Psoas muscle (tissue), 8 donors: ENCODE measurements at regions of chr6 and their contacts with region 1.

Region 1: GRCh38 chr6:40308533-40309306 is 278.4 kb downstream of the LRFN2 start:
- DNase-seq: peak in 1 of 2 donors; percentile 41
- ATAC-seq: peak; percentile 59 to 85 (median 73)
- H3K4me3 ChIP-seq: no peak overlapping the region
- H3K27ac ChIP-seq: no peak overlapping the region
- H3K4me1 ChIP-seq: no peaks in the 10 kb centered on the region
- H3K27me3 ChIP-seq: no peaks in the 10 kb centered on the region
- CTCF ChIP-seq: peak; percentile 88

Region 2: DNA sequence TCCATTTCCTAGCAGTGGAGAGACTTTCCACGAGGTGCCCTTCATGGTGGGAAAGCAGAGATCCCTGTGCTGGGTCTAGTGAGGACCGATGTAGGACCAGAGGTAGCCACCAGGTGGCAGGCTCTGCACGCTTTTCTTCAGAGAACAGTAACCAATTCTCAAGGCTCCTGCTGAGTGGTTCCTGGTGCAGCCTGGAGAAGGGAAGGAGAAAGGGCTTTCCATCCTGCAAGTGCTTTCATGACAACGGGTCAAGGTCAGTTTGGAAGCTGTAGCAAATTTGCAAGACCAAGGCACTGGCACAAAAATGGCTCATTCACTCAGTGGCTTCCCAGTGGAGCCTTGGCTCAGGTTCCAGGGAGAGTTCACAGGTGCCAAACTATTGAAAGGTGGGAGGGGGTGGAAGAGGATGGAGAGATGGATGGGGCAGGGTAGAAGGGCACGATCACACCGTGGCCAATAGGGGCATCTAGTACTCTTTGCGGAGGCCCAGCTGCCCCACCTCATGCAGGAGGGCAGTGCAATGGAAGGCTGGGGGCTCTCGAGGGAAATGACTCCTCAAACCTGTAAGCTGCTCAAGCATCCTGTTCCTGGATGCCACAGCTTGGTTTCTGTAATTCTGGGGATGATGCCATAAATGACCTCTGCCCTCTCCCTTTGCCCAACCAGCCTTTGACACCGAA is 960.7 kb before region 1 on chr6:
- intact Hi-C with region 1: loop called in 1 of 2 experiments (anchors 10 kb)
- DNase-seq: peak; percentile 70 to 78
- ATAC-seq: peak; percentile 83 to 86 (median 84)
- H3K4me3 ChIP-seq: no peak overlapping the region
- H3K27ac ChIP-seq: no peak overlapping the region
- H3K4me1 ChIP-seq: no peaks in the 10 kb centered on the region
- H3K27me3 ChIP-seq: no peaks in the 10 kb centered on the region
- CTCF ChIP-seq: peak; percentile 82

Region 3: GRCh38 chr6:39361657-39362486 is 946.8 kb before region 1 on chr6:
- intact Hi-C with region 1: loop called in 1 of 2 experiments (anchors 10 kb)
- DNase-seq: peak; percentile 50 to 73
- ATAC-seq: peak; percentile 84 to 91 (median 86)
- H3K4me3 ChIP-seq: no peak overlapping the region
- H3K27ac ChIP-seq: no peak overlapping the region
- H3K4me1 ChIP-seq: no peaks in the 10 kb centered on the region
- H3K27me3 ChIP-seq: no peaks in the 10 kb centered on the region
- CTCF ChIP-seq: peak; percentile 78

Region 4: DNA sequence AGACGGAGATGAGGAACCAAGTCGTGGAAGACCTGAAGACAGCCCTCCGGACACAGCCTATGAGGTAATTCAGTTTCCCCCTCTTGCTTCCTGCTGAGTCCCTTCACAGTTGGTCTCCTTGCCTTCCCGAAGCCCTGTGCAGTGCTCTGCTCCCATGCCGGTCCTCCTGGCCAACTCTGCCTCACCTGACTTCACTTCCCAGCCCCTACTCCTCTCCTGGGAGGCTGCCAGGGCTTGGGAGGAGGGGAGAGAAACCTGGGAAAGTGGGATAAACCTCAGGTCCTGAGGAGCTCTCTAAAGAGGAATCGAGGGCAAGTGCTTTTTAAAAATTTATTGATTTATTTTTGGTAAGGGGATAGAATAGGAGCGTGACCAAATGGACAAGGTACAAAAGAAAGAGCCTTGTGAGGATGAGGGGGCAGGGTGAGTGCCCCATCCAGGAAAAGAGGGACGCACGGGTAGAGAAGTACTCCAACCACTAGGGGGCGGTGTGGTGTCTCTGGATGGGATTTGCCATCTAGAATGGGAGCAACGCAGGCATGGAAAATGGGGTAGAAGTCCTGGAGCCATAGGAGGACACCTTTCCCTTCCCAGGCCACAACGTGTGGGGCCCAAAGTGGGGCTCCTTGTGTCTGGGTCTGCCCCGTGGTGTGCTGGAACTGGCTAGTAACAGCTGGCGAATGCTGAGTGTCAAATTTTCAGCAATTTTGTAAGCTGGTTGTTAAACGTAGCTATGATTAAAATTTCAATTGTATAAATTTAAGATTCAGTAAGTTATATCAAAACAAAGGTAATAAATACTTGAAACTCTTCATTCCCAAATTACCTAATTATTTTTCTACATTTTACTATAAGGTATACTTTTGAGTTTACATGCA is 443.5 kb before region 1 on chr6:
- intact Hi-C with region 1: loop called in 1 of 2 experiments (anchors 1 kb)
- DNase-seq: peak; percentile 75 to 81
- ATAC-seq: peak; percentile 72 to 87 (median 80)
- H3K4me3 ChIP-seq: no peak overlapping the region
- H3K27ac ChIP-seq: no peak overlapping the region
- H3K4me1 ChIP-seq: no peaks in the 10 kb centered on the region
- H3K27me3 ChIP-seq: no peaks in the 10 kb centered on the region
- CTCF ChIP-seq: peak; percentile 88

Region 5: GRCh38 chr6:39980839-39981580 is 327.7 kb before region 1 on chr6:
- intact Hi-C with region 1: loop called (anchors 2 to 5 kb)
- DNase-seq: no peak
- ATAC-seq: peak; percentile 77 to 96 (median 85)
- H3K4me3 ChIP-seq: no peak overlapping the region
- H3K27ac ChIP-seq: no peak overlapping the region
- H3K4me1 ChIP-seq: peaks cover 14% of the 10 kb centered on the region
- H3K27me3 ChIP-seq: no peaks in the 10 kb centered on the region
- CTCF ChIP-seq: peak; percentile 48

Region 6: DNA sequence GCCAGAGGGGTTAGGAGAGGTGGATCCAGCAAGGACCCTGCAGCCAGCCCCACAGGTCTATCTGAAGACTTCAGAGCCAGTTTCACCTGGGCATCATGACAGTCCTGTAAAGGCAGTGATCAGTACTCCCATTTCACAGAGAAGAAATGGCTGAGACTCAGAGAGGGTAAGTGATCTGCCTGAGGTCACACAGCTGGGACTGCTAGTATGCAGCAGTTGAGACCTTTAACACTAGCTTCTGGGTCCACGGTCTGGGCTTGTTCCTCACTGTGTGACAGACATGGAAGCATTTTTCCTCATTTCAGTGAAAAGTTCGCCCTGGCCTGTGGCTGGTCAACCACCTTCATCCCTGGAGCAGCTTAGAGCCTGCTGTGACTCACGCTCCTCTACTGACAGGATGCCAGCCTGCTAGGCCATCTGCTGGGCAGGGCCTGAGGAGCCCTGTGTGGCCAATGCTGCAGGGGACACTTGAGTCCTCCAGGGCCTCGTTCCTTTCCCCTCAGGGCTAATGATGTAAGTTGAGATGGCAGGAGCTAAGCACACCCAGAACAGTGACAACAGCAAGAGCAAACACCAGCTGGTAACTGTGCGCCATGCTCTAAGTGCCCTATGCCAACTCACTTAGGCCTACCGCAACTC is 86.5 kb after region 1 on chr6:
- intact Hi-C with region 1: no loop called
- DNase-seq: peak; percentile 52 to 88
- ATAC-seq: peak; percentile 92 to 97 (median 97)
- H3K4me3 ChIP-seq: no peak overlapping the region
- H3K27ac ChIP-seq: peak overlapping the region; percentile 61
- H3K4me1 ChIP-seq: peaks cover 7% of the 10 kb centered on the region
- H3K27me3 ChIP-seq: no peaks in the 10 kb centered on the region
- CTCF ChIP-seq: no peak

Region 7: GRCh38 chr6:40804905-40805304 is 496.2 kb after region 1 on chr6:
- intact Hi-C with region 1: loop called in 1 of 2 experiments (anchors 10 kb)
- DNase-seq: no peak
- ATAC-seq: no peak
- H3K4me3 ChIP-seq: no peak overlapping the region
- H3K27ac ChIP-seq: no peak overlapping the region
- H3K4me1 ChIP-seq: peaks cover 28% of the 10 kb centered on the region
- H3K27me3 ChIP-seq: no peaks in the 10 kb centered on the region
- CTCF ChIP-seq: peak; percentile 22